ENCODE measurements at regions of chr19 and their contacts with region 1.

Region 1: GRCh38 chr19:771332-771785 is 20.4 kb downstream of the MISP start:
- DNase-seq: peak in 2 of 9 experiments; percentile 47 to 56
- ATAC-seq: no peak
- H3K4me3 ChIP-seq: no peak overlapping the region
- H3K4me3 Mint-ChIP-seq: no peak overlapping the region
- H3K27ac ChIP-seq: no peak overlapping the region
- H3K27ac Mint-ChIP-seq: no peak overlapping the region
- H3K4me1 ChIP-seq: no peaks in the 10 kb centered on the region
- H3K4me1 Mint-ChIP-seq: peaks cover 2% of the 10 kb centered on the region
- H3K27me3 ChIP-seq: peaks cover 0 to 4% of the 10 kb centered on the region in 2 experiments
- H3K27me3 Mint-ChIP-seq: peaks cover 6% of the 10 kb centered on the region
- CTCF ChIP-seq: no peak

Region 2: DNA sequence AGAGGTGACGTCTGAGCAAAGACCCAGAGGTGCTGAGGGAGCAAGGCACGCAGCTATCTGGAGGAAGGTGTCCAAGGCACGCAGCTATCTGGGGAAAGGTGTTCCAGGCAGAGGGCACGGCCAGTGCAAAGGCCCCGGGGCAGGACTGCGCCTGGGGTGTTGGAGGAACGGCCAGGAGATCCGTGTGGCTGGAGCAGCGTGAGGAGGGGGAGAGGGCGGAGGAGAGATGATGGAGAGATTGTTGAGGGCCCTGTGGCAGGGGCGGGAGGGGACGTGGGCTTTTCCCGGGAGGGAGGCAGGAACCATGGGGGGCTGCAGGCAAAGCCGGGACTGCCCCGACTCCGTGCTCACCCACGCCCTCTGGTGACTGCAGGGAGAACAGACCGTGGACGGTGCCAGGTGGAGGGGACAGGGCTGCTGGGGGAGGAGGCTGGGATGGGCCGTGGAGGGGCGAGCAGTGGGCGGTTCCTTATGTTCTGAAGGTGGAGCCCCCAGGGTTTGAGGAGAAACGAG is 33.7 kb before region 1 on chr19:
- CTCF ChIA-PET with region 1: no interaction called
- POLR2A ChIA-PET with region 1: no interaction called
- intact Hi-C with region 1: no loop called
- DNase-seq: peak; percentile 27 to 73 (median 64)
- ATAC-seq: peak; percentile 75
- H3K4me3 ChIP-seq: no peak overlapping the region
- H3K4me3 Mint-ChIP-seq: no peak overlapping the region
- H3K27ac ChIP-seq: no peak overlapping the region
- H3K27ac Mint-ChIP-seq: no peak overlapping the region
- H3K4me1 ChIP-seq: no peaks in the 10 kb centered on the region
- H3K4me1 Mint-ChIP-seq: peaks cover 3% of the 10 kb centered on the region
- H3K27me3 ChIP-seq: no peaks in the 10 kb centered on the region
- H3K27me3 Mint-ChIP-seq: peaks cover 3% of the 10 kb centered on the region
- CTCF ChIP-seq: peak; percentile 56

Region 3: DNA sequence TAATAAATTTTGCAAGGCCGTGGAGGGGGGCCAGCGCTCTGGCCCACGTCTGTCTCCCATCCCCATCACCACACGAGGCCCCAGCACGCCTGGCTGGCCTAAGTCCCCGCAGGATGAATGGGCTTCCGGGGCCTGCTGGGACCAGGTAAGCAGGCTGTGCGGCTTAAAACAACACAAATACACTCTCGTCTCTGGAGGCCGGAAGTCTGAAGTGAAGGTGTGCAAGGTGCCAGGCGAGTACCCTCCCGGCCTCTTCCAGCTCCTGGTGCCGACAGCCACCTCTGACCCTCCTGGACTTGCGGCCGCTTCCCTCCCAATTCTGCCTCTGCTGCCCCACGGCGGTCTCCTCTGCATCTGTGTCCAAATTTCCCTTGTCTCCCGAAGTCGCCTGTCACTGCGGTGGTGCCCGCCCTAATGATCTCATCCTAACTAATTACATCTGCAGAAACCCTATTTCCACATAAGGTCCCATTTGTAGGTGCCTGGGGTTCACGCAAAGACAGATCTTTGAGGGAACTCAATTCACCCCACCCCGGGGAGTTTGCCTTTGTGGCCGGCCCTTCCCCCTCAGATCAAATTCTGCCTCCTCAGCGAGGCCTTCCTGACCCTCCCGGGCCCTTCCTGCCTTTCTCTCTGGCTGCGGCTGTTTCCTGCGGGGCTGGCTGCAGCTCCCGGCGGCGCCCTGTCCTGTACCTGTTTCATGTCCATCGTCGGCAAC is 17.8 kb after region 1 on chr19:
- CTCF ChIA-PET with region 1: no interaction called
- POLR2A ChIA-PET with region 1: no interaction called
- intact Hi-C with region 1: no loop called
- DNase-seq: no peak
- ATAC-seq: no peak
- H3K4me3 ChIP-seq: no peak overlapping the region
- H3K4me3 Mint-ChIP-seq: no peak overlapping the region
- H3K27ac ChIP-seq: no peak overlapping the region
- H3K27ac Mint-ChIP-seq: no peak overlapping the region
- H3K4me1 ChIP-seq: no peaks in the 10 kb centered on the region
- H3K4me1 Mint-ChIP-seq: no peaks in the 10 kb centered on the region
- H3K27me3 ChIP-seq: no peaks in the 10 kb centered on the region
- H3K27me3 Mint-ChIP-seq: no peaks in the 10 kb centered on the region
- CTCF ChIP-seq: no peak

Region 4: DNA sequence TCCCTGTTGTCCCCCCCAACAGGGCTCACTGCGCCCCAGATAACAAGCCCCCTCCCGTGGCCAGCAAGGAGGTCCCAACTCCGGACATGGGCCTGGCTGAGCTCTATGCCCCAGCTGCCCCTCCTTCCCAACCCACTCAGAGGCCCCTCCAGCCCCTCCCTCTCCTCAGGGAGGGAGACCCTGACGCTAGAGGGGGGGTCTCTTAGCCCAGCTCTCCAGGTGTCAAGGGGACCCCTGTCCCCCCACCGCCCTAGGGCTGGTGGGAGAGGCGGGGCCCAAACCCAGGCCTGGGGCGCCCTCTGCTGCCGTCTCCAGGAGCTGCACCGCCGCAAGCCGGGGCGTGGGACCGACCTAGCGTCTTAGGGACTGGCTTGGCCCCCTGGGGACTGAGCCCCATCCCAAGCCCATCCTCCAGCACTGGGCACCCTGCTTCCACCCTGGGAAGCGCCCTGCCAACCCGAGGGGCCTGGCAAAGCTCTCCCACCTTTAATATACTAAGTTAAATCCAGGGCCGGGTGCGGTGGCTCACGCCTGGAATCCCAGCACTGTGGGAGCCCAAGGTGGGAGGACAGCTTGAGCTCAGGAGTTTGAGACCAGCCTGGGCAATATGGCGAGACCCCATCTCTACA is 230.3 kb after region 1 on chr19:
- CTCF ChIA-PET with region 1: no interaction called
- POLR2A ChIA-PET with region 1: no interaction called
- intact Hi-C with region 1: loop called in 1 of 2 experiments (anchors 1 kb)
- DNase-seq: peak; percentile 57 to 84 (median 75)
- ATAC-seq: peak; percentile 78
- H3K4me3 ChIP-seq: no peak overlapping the region
- H3K4me3 Mint-ChIP-seq: no peak overlapping the region
- H3K27ac ChIP-seq: no peak overlapping the region
- H3K27ac Mint-ChIP-seq: no peak overlapping the region
- H3K4me1 ChIP-seq: peaks cover 24% of the 10 kb centered on the region
- H3K4me1 Mint-ChIP-seq: peaks cover 12% of the 10 kb centered on the region
- H3K27me3 ChIP-seq: peaks cover 18 to 32% of the 10 kb centered on the region in 2 experiments
- H3K27me3 Mint-ChIP-seq: peaks cover 15% of the 10 kb centered on the region
- CTCF ChIP-seq: peak; percentile 87

Measured in CD8-positive, alpha-beta T cell (primary cell).